K562 (cell line): ENCODE measurements at regions of chr7 and their contacts with region 1.

Region 1: GRCh38 chr7:128343554-128344430 is at the start of gene RBM28:
- DNase-seq: peak; percentile 97 to 98 (median 98)
- ATAC-seq: peak; percentile 94
- H3K4me3 ChIP-seq: peak within 1 kb of the TSS; percentile 82
- H3K27ac ChIP-seq: peak within 1 kb of the TSS; percentile 81
- H3K4me1 ChIP-seq: peaks cover 3 to 13% of the 10 kb centered on the region in 2 experiments; a peak in 4 of 5 replicates
- H3K27me3 ChIP-seq: peaks cover 0 to 4% of the 10 kb centered on the region in 2 experiments; a peak in 2 of 5 replicates
- CTCF ChIP-seq: peak in 2 of 3 experiments; percentile 4 to 8; a peak in 1 of 6 replicates
- EP300 ChIP-seq: no peak; the same call in none of the 2 replicates
- POLR2A ChIP-seq: peak; percentile 99
- RAD21 ChIP-seq: peak in 1 of 2 experiments; percentile 11; a peak in 1 of 4 replicates
- polyA plus RNA-seq, gene RBM28: 65.8 to 122 TPM

Region 2: DNA sequence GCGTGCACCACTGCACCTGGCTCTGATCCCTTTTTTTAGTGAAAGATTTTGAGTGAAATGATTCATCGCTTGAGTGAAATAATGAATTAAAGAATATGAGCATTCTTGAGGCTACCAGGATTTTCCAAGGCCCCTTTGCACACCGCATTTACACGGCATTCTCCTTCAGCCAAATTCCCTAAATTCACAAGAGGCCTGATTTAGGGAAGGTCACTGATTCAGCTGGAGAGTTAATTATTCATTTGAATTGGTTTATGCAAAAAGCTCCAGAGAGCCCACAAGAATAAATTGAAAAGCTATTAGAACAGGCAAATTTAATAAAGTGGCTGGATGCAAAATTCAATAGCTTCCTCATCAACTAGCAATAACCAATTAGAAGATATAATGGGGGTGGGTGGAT is 56.2 kb before region 1 on chr7:
- CTCF ChIA-PET with region 1: no interaction called
- POLR2A ChIA-PET with region 1: no interaction called
- in situ Hi-C with region 1: no loop called
- intact Hi-C with region 1: no loop called
- DNase-seq: no peak
- ATAC-seq: no peak
- H3K4me3 ChIP-seq: no peak overlapping the region
- H3K27ac ChIP-seq: no peak overlapping the region
- H3K4me1 ChIP-seq: no peaks in the 10 kb centered on the region
- H3K27me3 ChIP-seq: peaks cover 15 to 32% of the 10 kb centered on the region in 2 experiments; a peak in 4 of 5 replicates
- CTCF ChIP-seq: no peak
- EP300 ChIP-seq: no peak
- POLR2A ChIP-seq: no peak
- RAD21 ChIP-seq: no peak

Region 3: DNA sequence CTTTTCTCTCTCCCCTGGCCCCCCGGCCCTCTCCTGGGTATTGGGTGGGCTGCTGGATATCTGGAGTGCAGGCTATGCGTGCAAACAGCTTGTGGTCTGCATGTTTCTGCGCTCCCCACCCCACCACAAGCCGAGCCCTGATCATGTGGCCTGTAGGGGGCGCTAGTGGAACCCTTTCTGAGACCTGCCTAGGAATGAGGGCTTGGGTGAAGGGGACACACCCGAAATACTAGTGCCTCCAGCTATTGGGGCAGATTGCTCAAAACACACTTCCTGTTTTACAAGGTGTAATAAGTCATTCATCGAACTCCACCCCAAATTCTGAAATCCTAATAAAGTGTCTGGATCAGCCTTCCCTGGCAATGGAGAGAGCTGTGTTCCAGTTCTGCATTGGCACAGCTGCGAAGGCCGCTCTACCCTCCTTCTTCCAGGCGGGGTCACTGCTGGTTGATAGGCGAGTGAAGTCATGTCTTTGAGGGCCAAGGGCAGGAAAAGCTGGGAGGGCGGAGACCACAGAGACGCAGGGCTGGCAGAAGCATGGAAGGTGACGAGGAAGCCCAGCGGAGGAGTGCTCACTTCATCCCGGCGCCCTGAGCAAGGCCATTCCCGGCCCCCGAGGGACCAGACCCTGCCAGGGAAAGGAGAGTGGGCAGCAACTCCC is 37.5 kb after region 1 on chr7:
- CTCF ChIA-PET with region 1: interaction called, 81 read pairs
- POLR2A ChIA-PET with region 1: interaction called, 7 read pairs
- in situ Hi-C with region 1: loop called (anchors 5 kb)
- intact Hi-C with region 1: no loop called
- DNase-seq: peak; percentile 83 to 92 (median 90)
- ATAC-seq: peak; percentile 87
- H3K4me3 ChIP-seq: no peak overlapping the region
- H3K27ac ChIP-seq: no peak overlapping the region
- H3K4me1 ChIP-seq: peaks cover 6 to 18% of the 10 kb centered on the region in 2 experiments; a peak in 4 of 5 replicates
- H3K27me3 ChIP-seq: peaks cover 0 to 2% of the 10 kb centered on the region in 2 experiments; a peak in 2 of 5 replicates
- CTCF ChIP-seq: peak; percentile 84 to 98 (median 86)
- EP300 ChIP-seq: no peak
- POLR2A ChIP-seq: no peak
- RAD21 ChIP-seq: peak in 1 of 2 experiments; percentile 28; a peak in 2 of 4 replicates

Region 4: DNA sequence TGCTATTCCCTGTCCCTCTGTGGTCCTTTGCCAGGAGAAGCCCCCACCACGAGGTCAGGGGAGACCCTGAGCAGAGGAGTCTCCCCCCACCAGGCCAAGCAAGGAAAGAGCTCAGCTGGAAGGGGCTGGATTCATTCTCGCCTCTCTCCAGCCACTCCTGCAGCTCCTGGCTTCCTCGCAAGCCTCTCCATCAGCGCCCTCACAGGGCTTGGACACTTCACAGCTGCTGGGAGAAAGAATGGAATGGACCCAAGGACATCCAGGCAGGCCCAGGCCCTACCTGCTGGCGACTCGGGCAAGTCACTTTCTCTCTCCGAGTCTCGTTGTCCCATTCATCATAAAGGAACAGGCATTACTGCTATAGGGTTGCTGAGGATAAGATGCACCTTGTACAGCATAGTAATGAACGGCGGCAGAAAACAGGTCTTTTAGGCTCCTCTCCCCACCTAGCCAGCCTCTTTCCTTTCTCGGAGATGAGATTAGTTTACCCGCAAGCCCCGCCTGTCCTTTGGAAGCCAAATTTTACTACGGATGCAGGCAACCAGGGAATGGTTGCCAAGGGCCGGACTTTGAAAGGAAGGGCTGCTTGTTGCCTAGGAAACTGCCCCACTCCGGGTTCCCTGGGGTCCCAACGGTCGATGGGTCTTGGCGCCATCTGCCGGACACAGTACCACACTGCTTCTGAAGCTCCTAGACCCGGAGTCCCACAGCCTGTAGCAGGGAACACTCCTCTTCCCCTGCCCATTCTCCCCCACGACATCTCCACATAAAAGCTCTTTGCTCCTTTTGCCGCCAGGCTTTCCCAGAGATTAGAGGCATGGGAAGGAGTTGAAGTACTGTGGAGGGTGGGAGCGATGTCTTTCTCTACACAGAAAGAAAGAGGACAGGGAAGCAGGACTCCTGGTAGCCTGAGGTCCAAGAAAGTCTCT is 43.7 kb after region 1 on chr7:
- CTCF ChIA-PET with region 1: interaction called, 81 read pairs
- POLR2A ChIA-PET with region 1: interaction called, 13 read pairs
- in situ Hi-C with region 1: loop called (anchors 5 kb)
- intact Hi-C with region 1: loop called (anchors 1 kb)
- DNase-seq: peak; percentile 88 to 97 (median 96)
- ATAC-seq: peak; percentile 92
- H3K4me3 ChIP-seq: no peak overlapping the region
- H3K27ac ChIP-seq: no peak overlapping the region
- H3K4me1 ChIP-seq: peaks cover 5 to 20% of the 10 kb centered on the region in 2 experiments; a peak in 4 of 5 replicates
- H3K27me3 ChIP-seq: no peaks in the 10 kb centered on the region
- CTCF ChIP-seq: peak; percentile 95 to 97 (median 97)
- EP300 ChIP-seq: no peak
- POLR2A ChIP-seq: no peak
- RAD21 ChIP-seq: peak; percentile 92 to 93

Region 5: GRCh38 chr7:128409596-128410160 is 65.9 kb after region 1 on chr7 and contains the start of gene IMPDH1:
- CTCF ChIA-PET with region 1: no interaction called
- POLR2A ChIA-PET with region 1: interaction called, 10 read pairs
- in situ Hi-C with region 1: no loop called
- intact Hi-C with region 1: no loop called
- DNase-seq: peak; percentile 89 to 100 (median 99)
- ATAC-seq: peak; percentile 89
- H3K4me3 ChIP-seq: peak within 1 kb of the TSS; percentile 49
- H3K27ac ChIP-seq: peak within 1 kb of the TSS; percentile 72
- H3K4me1 ChIP-seq: peaks cover 43 to 57% of the 10 kb centered on the region in 2 experiments
- H3K27me3 ChIP-seq: no peaks in the 10 kb centered on the region
- CTCF ChIP-seq: no peak
- EP300 ChIP-seq: no peak
- POLR2A ChIP-seq: peak; percentile 75
- RAD21 ChIP-seq: no peak
- polyA plus RNA-seq, gene IMPDH1: 0.80 to 2.1 TPM